ENCODE measurements at regions of chr7 and their contacts with region 1.

Region 1: DNA sequence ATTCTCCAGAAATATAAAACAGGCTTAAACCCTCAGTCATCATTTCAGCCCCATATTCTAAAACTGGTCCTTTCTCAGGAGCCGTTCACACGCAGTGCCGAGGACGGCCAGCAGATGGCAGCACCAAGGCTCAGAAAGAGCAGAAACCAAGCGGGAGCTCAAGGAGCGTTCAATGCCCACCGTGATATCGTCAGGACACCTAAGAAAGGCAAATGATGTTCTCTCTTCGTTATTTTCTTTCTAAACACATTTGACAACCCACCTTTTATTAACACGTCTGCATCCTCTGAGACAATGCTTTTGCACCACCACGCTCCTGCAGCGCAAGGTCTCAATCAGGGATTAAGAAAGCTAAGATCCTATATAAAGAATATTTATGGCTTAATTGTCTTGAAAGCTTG is 45.7 kb upstream of the RBM33 start:
- DNase-seq: peak; percentile 79
- CTCF ChIP-seq: peak; percentile 98

Region 2: DNA sequence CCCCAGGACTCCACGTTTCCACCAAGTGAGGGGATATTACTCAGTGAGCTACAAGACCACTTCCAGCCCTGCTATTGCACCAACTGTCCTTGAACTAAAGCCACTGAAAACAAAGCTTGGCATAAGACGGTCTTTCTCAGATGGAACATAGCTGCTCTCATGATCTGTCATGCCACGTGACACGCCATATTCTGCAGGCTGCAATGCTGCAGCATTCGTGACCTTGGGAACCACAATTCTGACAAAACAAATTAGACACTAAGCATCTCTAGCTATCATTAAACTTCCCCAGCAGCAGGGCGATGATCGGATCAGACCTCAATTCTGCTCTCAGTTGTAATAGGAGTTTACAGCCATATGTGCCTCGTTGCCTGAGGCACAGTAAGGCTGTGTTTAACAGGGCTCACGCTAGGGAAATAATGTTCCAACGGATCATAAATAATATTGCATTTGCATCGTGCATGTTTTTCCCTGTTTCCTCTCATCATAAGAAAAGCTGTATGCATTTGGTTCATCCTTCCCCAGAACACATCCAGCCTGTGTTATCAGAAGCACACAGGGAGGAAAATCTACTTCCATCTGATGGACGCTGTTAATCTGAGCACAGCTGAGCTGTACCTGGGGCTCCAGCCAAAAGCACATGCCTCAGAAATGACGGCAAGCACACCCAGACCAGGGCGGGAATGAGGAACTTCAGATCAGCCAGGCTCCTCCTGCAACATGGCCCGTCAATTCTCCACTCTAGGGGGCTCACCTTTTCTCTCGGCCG is 13.9 kb before region 1 on chr7:
- CTCF ChIA-PET with region 1: interaction called, 36 read pairs
- POLR2A ChIA-PET with region 1: no interaction called
- DNase-seq: no peak
- CTCF ChIP-seq: no peak

Region 3: DNA sequence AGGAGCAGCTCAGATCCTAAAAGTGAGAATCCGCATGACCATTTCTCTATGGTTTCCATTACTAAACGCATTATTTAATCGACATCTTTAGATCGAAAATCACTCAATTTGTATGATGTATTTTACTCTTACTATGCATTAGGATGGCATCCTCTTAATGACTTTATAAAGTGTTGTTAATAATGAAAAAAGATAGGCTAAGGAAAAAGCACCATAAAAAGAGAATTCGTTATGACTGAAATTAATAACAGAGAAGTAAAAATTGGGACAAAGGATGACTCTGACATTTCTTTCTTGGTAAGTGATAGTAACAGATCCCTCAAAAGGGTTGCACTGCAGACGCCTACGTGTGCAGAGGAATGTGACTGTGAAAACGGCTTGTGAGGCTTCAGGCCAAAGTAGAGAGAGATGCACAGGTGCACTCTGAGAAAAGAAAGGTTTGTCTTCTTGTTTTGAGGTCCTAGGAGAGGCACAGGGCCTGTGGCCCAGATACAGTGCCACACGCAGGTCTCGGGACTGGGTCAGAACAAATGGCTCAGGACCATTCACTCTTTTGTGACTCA is 22.7 kb after region 1 on chr7:
- CTCF ChIA-PET with region 1: interaction called, 12 read pairs
- POLR2A ChIA-PET with region 1: no interaction called
- DNase-seq: no peak
- CTCF ChIP-seq: no peak

Region 4: GRCh38 chr7:155653803-155654202 is 55.0 kb after region 1 on chr7:
- CTCF ChIA-PET with region 1: interaction called, 11 read pairs
- POLR2A ChIA-PET with region 1: no interaction called
- DNase-seq: no peak
- CTCF ChIP-seq: no peak

Region 5: GRCh38 chr7:155722118-155722517 is 123.3 kb after region 1 on chr7:
- CTCF ChIA-PET with region 1: interaction called, 12 read pairs
- POLR2A ChIA-PET with region 1: no interaction called
- DNase-seq: no peak
- CTCF ChIP-seq: no peak

Region 6: DNA sequence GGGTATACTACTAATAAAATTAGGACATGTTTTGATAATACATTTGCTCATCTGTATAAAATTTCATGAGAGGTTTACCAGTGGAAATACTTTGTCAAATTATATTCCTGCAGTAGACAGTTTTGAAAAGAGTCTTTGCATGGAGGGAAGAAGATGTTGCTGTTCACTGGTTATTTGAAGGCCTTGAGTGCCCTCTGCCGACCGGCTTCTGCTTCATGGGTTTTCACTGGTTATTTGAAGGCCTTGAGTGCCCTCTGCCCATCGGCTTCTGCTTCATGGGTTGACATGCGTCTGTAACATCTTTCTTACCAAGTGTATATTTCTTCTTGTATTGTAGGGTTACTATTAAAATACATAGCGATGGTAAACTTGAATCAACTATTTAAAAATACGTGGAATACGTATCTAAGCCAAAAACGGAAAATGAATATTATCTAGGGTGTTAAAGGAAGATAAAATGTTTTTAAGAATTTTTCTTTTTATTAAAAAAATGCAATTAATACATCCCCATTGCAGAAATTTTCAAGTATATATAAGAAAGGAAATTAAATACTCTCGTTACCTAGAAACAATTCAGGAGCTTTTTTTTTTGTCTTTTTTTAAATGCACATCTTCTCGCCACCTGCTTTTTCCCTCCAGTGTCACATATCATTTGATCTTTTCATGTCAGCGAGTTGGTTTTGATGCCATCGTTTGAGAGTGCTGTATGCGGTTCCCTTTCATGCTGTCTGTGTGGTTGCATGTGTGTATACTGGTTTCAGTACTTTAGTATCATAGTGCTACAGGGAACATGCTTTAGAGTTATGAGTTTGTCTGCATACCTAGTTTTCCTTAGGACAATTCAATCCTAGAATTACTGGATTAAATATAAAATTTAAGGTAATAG is 140.1 kb after region 1 on chr7:
- CTCF ChIA-PET with region 1: interaction called, 170 read pairs
- POLR2A ChIA-PET with region 1: no interaction called
- DNase-seq: peak; percentile 42
- CTCF ChIP-seq: peak; percentile 76

Region 7: GRCh38 chr7:155758348-155758747 is 159.5 kb after region 1 on chr7:
- CTCF ChIA-PET with region 1: interaction called, 13 read pairs
- POLR2A ChIA-PET with region 1: no interaction called
- DNase-seq: no peak
- CTCF ChIP-seq: no peak

Measured in GM10248 (cell line).